Naive thymus-derived CD4-positive, alpha-beta T cell (primary cell): ENCODE measurements at regions of chr12 and their contacts with region 1.

Region 1: DNA sequence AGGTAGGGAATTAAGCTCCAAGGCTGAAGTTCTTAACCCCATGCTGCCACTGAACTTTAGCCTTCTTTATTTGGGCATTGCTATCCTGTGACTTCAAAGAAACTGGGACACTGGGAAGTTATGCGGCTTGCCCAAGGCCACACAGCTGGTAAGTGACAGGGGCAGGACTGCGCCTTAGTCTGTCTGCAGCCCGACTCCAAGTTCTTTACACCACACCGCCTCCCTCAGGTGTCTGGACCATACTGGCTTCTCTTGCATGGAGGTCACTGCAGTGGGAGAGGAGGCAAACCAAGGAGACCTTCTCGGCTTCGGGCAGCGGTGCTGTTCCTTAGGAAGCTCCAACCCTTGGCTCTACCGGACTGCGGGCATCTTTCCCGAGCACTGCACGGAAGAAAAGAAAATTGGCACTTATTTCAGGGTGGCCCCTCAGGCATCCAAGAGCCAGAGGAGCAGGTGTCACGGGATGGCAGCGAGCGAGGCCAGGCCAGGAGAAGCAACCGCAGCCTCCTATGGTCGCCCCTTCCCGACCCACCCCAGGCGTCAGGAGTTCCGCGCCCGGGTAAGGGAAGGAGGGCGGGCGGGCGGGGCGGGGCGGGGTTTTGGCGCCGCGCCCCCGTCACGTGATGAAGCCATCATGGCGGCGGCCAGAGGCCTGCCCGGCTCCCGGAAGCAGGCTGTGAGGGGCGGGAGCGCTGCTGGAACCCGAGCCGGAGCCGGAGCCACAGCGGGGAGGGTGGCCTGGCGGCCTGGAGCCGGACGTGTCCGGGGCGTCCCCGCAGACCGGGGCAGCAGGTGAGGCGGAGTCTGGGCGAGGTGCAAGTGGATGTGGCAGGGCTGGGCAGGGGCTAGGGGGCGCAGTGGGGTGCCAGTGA is 16.4 kb upstream of the ESPL1 start:
- DNase-seq: peak; percentile 58 to 81 (median 69)
- ATAC-seq: peak; percentile 90
- H3K4me3 ChIP-seq: peak overlapping the region; percentile 95
- H3K4me3 Mint-ChIP-seq: peak overlapping the region; percentile 89 to 98 (median 96)
- H3K27ac ChIP-seq: peak overlapping the region; percentile 95
- H3K27ac Mint-ChIP-seq: peak overlapping the region; percentile 84 to 97 (median 94)
- H3K4me1 ChIP-seq: peaks cover 26 to 38% of the 10 kb centered on the region in 2 donors
- H3K4me1 Mint-ChIP-seq: peaks cover 37 to 59% (median 48%) of the 10 kb centered on the region in 7 donors
- H3K27me3 ChIP-seq: no peaks in the 10 kb centered on the region
- H3K27me3 Mint-ChIP-seq: no peaks in the 10 kb centered on the region

Region 2: DNA sequence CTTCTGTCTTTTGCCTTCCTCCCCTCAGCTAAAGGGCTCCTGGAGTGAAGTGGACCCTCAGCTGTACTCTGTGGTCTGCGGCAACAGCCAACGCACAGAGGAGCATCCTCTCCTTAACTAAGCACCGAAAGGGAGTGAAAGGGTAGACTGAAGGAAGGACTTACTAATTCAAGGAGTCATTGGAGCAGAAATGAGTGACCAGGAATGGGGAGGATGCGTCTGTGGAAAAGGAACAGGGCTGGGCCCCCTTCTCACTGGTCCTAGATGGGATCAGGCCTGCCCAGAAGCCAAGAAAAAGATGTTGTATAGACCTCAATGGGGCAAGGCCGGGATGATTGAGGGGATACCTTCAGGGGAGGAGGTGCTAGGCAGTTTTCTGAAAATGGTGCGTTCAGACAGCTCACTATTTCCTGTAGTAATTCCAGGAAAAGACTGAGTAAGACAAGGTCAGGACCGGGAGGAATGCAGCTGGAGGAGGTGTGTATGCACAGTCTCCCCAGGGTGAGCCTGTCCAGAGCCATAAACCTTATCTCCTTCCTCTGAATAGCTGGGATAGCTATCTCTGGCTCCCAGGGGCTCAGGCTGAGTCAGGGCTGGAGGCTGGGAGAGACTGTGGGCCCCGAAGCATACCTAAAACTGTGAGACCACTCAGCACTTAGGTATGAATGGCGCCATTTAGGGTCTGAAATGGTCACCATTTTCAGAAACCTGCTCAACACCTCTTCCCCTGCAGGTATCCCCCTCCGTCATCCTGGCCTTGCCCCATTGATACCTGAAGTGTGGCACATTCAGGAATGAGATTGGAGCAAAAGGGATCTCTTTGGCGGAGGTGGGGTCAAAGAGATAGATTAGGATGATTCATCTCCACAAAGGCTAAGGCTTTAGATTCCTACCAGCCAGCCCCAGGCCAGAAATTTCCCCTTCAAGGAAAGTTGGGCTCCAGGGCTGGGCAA is 326.7 kb before region 1 on chr12:
- CTCF ChIA-PET with region 1: no interaction called
- POLR2A ChIA-PET with region 1: no interaction called
- intact Hi-C with region 1: no loop called
- DNase-seq: no peak
- ATAC-seq: no peak
- H3K4me3 ChIP-seq: no peak overlapping the region
- H3K4me3 Mint-ChIP-seq: no peak overlapping the region
- H3K27ac ChIP-seq: no peak overlapping the region
- H3K27ac Mint-ChIP-seq: no peak overlapping the region
- H3K4me1 ChIP-seq: no peaks in the 10 kb centered on the region
- H3K4me1 Mint-ChIP-seq: peaks cover 0 to 9% (median 0%) of the 10 kb centered on the region in 7 donors
- H3K27me3 ChIP-seq: no peaks in the 10 kb centered on the region
- H3K27me3 Mint-ChIP-seq: peaks cover 0 to 15% (median 0%) of the 10 kb centered on the region in 5 donors

Region 3: GRCh38 chr12:53205747-53206419 is 45.8 kb before region 1 on chr12:
- CTCF ChIA-PET with region 1: interaction called, 121 read pairs
- POLR2A ChIA-PET with region 1: interaction called, 20 read pairs
- intact Hi-C with region 1: no loop called
- DNase-seq: peak in 1 of 9 donors; percentile 75
- ATAC-seq: peak; percentile 68
- H3K4me3 ChIP-seq: peak overlapping the region; percentile 84
- H3K4me3 Mint-ChIP-seq: peak overlapping the region; percentile 83 to 92 (median 86)
- H3K27ac ChIP-seq: peak overlapping the region; percentile 85
- H3K27ac Mint-ChIP-seq: peak overlapping the region; percentile 61 to 90 (median 87)
- H3K4me1 ChIP-seq: peaks cover 63 to 73% of the 10 kb centered on the region in 2 donors
- H3K4me1 Mint-ChIP-seq: peaks cover 53 to 84% (median 71%) of the 10 kb centered on the region in 7 donors
- H3K27me3 ChIP-seq: no peaks in the 10 kb centered on the region
- H3K27me3 Mint-ChIP-seq: no peaks in the 10 kb centered on the region

Region 4: DNA sequence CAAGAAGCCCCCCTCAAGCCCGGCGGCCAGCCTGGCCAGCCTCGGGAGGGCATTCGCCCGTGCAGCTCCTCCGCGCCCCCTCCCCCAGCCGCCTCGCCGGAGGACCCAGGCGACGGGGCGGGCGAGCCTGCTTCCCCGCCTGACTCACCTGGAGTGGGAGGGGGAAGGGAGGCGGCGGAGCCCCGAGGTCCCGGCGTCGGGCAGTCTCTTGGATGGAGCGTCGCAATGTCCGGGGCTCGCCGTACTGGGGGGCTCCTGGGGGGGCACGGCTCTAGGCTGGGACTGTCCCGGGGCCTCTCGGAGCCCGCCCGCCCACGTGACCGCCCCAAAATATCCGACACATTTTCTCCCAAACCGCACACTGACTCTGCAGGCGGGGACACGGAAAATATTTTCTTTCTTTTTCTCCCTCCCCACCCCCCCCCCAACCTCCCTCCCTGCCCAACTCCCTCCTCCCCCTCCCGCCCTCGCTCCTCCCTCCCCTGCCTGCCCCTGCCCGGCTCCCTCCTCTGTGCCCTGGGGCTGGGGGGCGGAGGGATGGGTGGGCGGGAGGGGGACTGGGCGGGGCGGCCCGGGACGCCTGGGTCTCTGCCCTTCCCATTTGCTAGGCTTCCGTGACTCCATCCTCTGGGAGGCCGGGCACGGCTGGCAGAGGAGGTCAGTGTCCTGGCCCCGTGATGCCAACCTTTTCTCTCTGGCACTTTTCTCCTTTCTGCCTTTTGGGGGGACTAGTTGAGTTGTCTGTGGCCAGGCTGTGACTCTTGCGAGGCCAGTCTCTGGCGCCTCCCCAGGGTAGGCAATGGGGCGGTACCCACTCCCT is 19.7 kb before region 1 on chr12 and contains the start of gene RARG:
- CTCF ChIA-PET with region 1: interaction called, 9 read pairs
- POLR2A ChIA-PET with region 1: interaction called, 4 read pairs
- intact Hi-C with region 1: loop called (anchors 1 kb)
- DNase-seq: peak in 3 of 9 donors; percentile 33 to 78 (median 58)
- ATAC-seq: peak; percentile 74
- H3K4me3 ChIP-seq: peak within 1 kb of the TSS; percentile 52
- H3K4me3 Mint-ChIP-seq: peak within 1 kb of the TSS; percentile 83 to 95 (median 88)
- H3K27ac ChIP-seq: peak within 1 kb of the TSS; percentile 56
- H3K27ac Mint-ChIP-seq: peak within 1 kb of the TSS; percentile 77 to 90 (median 86)
- H3K4me1 ChIP-seq: peaks cover 40% of the 10 kb centered on the region in 2 donors
- H3K4me1 Mint-ChIP-seq: peaks cover 38 to 76% (median 67%) of the 10 kb centered on the region in 7 donors
- H3K27me3 ChIP-seq: no peaks in the 10 kb centered on the region
- H3K27me3 Mint-ChIP-seq: no peaks in the 10 kb centered on the region
- total RNA-seq, gene RARG: 22.4 to 73.1 (median 57.4) TPM

Region 5: GRCh38 chr12:53267999-53268647 is 16.4 kb after region 1 on chr12 and contains the start of gene ESPL1:
- CTCF ChIA-PET with region 1: interaction called, 7 read pairs
- POLR2A ChIA-PET with region 1: interaction called, 9 read pairs
- intact Hi-C with region 1: loop called (anchors 1 kb)
- DNase-seq: peak; percentile 67 to 91 (median 81)
- ATAC-seq: peak; percentile 93
- H3K4me3 ChIP-seq: peak within 1 kb of the TSS; percentile 80
- H3K4me3 Mint-ChIP-seq: peak within 1 kb of the TSS; percentile 95 to 99 (median 96)
- H3K27ac ChIP-seq: peak within 1 kb of the TSS; percentile 83
- H3K27ac Mint-ChIP-seq: peak within 1 kb of the TSS; percentile 44 to 98 (median 88)
- H3K4me1 ChIP-seq: peaks cover 9 to 11% of the 10 kb centered on the region in 2 donors
- H3K4me1 Mint-ChIP-seq: peaks cover 10 to 54% (median 20%) of the 10 kb centered on the region in 7 donors
- H3K27me3 ChIP-seq: no peaks in the 10 kb centered on the region
- H3K27me3 Mint-ChIP-seq: no peaks in the 10 kb centered on the region
- total RNA-seq, gene ESPL1: 0.08 to 65.4 (median 1.1) TPM

Region 6: DNA sequence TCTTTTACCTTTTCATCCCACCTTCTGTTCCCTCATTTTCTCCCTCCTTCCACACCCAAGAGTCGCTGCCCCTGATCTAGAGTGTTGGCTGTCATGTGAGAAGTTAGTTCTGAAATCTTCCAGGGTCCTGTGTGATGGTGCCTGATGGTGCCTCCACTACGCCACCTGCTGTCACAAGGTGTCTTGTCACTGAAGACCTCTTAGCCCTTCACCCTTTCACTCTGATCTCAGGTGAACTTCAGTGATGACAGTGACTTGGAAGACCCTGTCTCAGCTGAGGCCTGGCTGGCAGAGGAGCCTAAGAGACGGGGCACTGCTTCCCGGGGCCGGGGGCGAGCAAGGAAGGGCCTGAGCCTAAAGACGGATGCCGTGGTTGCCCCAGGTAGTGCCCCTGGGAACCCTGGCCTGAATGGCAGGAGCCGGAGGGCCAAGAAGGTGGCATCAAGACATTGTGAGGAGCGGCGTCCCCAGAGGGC is 36.1 kb after region 1 on chr12:
- CTCF ChIA-PET with region 1: no interaction called
- POLR2A ChIA-PET with region 1: interaction called, 3 read pairs
- intact Hi-C with region 1: loop called (anchors 1 to 2 kb)
- DNase-seq: peak; percentile 43 to 76 (median 69)
- ATAC-seq: peak; percentile 94
- H3K4me3 ChIP-seq: no peak overlapping the region
- H3K4me3 Mint-ChIP-seq: no peak overlapping the region
- H3K27ac ChIP-seq: no peak overlapping the region
- H3K27ac Mint-ChIP-seq: peak overlapping the region in 4 of 9 donors; percentile 8 to 86 (median 25)
- H3K4me1 ChIP-seq: no peaks in the 10 kb centered on the region
- H3K4me1 Mint-ChIP-seq: peaks cover 4 to 11% (median 5%) of the 10 kb centered on the region in 7 donors
- H3K27me3 ChIP-seq: no peaks in the 10 kb centered on the region
- H3K27me3 Mint-ChIP-seq: no peaks in the 10 kb centered on the region